MCF 10A (cell line): ENCODE measurements at regions of chr11 and their contacts with region 1.

Region 1: GRCh38 chr11:111283945-111284481 is 14.3 kb upstream of the POU2AF3 start:
- DNase-seq: no peak
- H3K4me3 Mint-ChIP-seq: no peak overlapping the region
- H3K27ac Mint-ChIP-seq: no peak overlapping the region
- H3K4me1 Mint-ChIP-seq: no peaks in the 10 kb centered on the region
- H3K27me3 Mint-ChIP-seq: peaks cover 28% of the 10 kb centered on the region
- CTCF ChIP-seq: no peak

Region 2: GRCh38 chr11:111019871-111020670 is 263.9 kb before region 1 on chr11:
- CTCF ChIA-PET with region 1: no interaction called
- POLR2A ChIA-PET with region 1: no interaction called
- intact Hi-C with region 1: no loop called
- DNase-seq: peak; percentile 13
- H3K4me3 Mint-ChIP-seq: no peak overlapping the region
- H3K27ac Mint-ChIP-seq: no peak overlapping the region
- H3K4me1 Mint-ChIP-seq: peaks cover 7% of the 10 kb centered on the region
- H3K27me3 Mint-ChIP-seq: peaks cover 31% of the 10 kb centered on the region
- CTCF ChIP-seq: no peak

Region 3: DNA sequence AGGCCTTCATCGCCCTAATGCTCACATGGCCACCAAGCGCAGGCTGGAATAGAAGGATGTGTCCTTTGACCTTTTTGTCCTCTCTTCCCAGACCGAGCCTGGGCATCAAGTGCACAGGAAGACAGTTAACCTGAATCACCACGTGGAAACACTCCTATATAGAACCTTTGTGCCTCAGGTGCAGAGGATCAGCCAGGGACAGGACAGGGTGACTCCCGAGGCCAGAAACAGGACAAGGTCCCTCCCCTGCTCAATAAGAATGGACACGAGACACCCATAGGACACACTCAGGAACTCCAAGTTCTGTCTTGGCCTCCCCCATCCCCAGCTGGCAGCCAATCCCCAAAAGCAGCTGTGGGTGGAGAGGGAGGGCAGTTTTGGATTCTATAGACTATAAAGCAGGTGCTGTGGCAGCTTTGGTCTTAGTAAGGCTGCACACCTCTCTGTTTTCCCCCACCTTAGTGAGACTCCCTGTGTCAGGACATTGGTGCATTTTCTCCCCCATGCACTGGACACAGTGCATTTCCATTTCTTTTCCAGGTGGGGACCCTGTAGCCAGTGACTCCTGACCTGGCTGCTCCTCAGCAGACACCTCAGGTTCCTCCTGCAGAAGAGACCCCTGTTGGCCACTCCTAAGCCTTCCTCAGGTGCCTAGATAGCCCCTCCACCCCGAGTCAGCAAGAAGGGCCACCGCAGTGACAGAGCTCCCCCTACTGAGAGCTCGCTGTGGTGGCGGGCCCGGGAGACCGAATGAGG is 138.7 kb after region 1 on chr11:
- CTCF ChIA-PET with region 1: interaction called, 233 read pairs
- POLR2A ChIA-PET with region 1: interaction called, 3 read pairs
- intact Hi-C with region 1: loop called (anchors 1 kb)
- DNase-seq: peak; percentile 62
- H3K4me3 Mint-ChIP-seq: no peak overlapping the region
- H3K27ac Mint-ChIP-seq: no peak overlapping the region
- H3K4me1 Mint-ChIP-seq: peaks cover 17% of the 10 kb centered on the region
- H3K27me3 Mint-ChIP-seq: no peaks in the 10 kb centered on the region
- CTCF ChIP-seq: peak; percentile 43

Region 4: DNA sequence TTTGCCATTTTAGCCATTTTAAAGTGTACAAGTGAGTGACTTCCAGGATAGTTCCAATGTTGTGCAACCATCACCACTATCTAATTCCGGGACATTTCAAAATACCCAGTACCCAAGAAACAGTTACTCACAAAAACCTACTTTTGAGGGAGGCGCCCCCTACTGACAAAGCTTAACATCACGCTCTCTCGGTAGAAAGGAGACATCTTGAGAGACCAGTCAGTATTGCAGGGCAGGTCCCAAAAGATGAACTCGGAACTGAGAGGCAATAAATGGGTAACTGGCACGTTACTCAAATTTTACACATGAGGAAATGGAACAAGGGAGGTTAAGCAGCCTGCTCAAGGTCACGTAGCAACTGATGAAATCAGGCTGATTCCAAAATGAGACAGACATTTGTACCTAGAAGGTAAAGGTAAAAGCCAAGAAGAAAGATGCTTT is 145.1 kb after region 1 on chr11:
- CTCF ChIA-PET with region 1: interaction called, 233 read pairs
- POLR2A ChIA-PET with region 1: interaction called, 7 read pairs
- intact Hi-C with region 1: loop called (anchors 2 kb)
- DNase-seq: peak; percentile 82
- H3K4me3 Mint-ChIP-seq: no peak overlapping the region
- H3K27ac Mint-ChIP-seq: no peak overlapping the region
- H3K4me1 Mint-ChIP-seq: peaks cover 22% of the 10 kb centered on the region
- H3K27me3 Mint-ChIP-seq: no peaks in the 10 kb centered on the region
- CTCF ChIP-seq: peak; percentile 74

Region 5: DNA sequence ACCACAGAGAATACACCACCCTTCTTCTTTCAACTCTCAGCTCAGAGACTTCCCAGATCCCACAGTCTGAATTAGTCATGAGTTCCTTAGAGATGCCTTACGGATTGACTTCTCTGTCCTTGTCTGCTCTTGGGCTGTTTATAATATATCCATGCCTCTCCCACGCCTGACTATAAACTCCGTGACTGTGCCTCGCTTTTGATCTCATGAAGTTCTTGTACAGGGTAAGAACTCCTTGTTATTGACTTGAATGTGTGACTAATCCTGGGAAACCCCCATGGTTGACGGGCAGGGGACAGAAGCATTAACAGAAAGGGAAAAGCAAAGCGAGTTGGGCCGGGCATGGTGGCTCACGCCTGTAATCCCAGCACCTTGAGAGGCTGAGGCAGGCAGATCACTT is 157.4 kb after region 1 on chr11:
- CTCF ChIA-PET with region 1: interaction called, 108 read pairs
- POLR2A ChIA-PET with region 1: interaction called, 5 read pairs
- intact Hi-C with region 1: loop called (anchors 1 kb)
- DNase-seq: peak; percentile 42
- H3K4me3 Mint-ChIP-seq: no peak overlapping the region
- H3K27ac Mint-ChIP-seq: peak overlapping the region; percentile 46
- H3K4me1 Mint-ChIP-seq: peaks cover 15% of the 10 kb centered on the region
- H3K27me3 Mint-ChIP-seq: peaks cover 11% of the 10 kb centered on the region
- CTCF ChIP-seq: no peak

Region 6: DNA sequence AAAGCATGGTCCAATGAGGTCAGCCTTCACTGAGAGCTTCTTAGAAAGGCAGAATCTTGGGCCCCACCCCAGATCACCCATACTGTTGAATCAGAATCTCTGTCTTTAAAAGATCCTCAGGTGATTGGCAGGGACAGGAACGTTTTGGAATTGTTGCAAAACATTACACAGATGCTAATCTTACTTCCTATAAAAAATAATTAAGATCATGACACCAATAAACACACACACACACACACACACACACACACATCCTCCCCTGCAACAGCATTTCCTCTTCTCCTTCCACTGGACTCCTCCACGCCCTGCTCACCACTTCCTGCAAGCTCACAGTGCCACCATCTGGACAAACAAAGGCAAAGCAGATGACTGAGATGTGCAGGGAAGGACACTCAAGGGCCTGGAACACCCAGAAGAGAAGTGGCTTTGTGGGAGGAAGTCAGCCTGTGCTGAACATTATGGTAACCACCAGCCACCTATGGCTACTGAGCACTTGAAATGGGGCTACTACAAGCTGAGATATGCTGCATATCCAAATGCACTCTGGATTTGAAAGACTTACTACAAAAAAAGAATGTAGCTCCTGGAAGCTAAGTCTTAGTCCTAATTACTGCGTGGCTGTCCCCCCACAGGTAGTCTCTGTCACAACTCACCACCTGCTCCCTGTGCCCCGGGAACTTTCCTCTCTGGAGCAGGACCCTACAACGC is 162.5 kb after region 1 on chr11:
- CTCF ChIA-PET with region 1: interaction called, 108 read pairs
- POLR2A ChIA-PET with region 1: interaction called, 5 read pairs
- intact Hi-C with region 1: loop called (anchors 1 kb)
- DNase-seq: peak; percentile 90
- H3K4me3 Mint-ChIP-seq: no peak overlapping the region
- H3K27ac Mint-ChIP-seq: no peak overlapping the region
- H3K4me1 Mint-ChIP-seq: peaks cover 8% of the 10 kb centered on the region
- H3K27me3 Mint-ChIP-seq: peaks cover 13% of the 10 kb centered on the region
- CTCF ChIP-seq: peak; percentile 79

Region 7: DNA sequence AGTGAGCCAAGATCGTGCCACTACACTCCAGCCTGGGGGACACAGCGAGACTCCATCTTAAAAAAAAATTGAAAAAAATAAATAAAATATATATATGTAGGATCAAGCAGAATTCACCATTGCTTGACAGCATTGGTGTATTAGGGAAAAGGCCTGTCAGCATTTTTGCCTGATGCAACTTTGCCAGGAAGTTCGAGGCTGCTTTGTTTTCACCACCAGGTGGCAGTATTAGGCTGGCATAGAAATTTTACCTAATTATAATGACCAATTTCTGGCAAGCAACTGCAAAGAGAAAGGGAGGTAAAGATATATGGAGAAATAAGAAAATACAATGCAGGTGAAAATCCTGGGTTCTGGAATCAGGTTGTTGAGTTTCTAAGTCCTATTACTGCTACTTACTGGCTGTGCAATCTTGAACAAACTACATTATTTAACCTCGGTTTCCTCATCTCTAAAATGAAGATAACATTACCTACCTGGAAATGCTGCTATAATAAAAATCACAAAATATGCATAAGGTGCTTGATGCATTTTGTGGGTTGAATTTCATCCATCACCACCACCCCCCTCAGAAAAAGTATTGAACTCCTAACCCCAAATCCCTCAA is 281.2 kb after region 1 on chr11:
- CTCF ChIA-PET with region 1: interaction called, 3 read pairs
- POLR2A ChIA-PET with region 1: no interaction called
- intact Hi-C with region 1: loop called (anchors 10 kb)
- DNase-seq: peak; percentile 75
- H3K4me3 Mint-ChIP-seq: no peak overlapping the region
- H3K27ac Mint-ChIP-seq: no peak overlapping the region
- H3K4me1 Mint-ChIP-seq: peaks cover 13% of the 10 kb centered on the region
- H3K27me3 Mint-ChIP-seq: no peaks in the 10 kb centered on the region
- CTCF ChIP-seq: peak; percentile 70